Activated CD4-positive, alpha-beta memory T cell treated with anti-CD3 and anti-CD28 coated beads for 36 hours (primary cell): ENCODE measurements at regions of chr10 and their contacts with region 1.

Region 1: DNA sequence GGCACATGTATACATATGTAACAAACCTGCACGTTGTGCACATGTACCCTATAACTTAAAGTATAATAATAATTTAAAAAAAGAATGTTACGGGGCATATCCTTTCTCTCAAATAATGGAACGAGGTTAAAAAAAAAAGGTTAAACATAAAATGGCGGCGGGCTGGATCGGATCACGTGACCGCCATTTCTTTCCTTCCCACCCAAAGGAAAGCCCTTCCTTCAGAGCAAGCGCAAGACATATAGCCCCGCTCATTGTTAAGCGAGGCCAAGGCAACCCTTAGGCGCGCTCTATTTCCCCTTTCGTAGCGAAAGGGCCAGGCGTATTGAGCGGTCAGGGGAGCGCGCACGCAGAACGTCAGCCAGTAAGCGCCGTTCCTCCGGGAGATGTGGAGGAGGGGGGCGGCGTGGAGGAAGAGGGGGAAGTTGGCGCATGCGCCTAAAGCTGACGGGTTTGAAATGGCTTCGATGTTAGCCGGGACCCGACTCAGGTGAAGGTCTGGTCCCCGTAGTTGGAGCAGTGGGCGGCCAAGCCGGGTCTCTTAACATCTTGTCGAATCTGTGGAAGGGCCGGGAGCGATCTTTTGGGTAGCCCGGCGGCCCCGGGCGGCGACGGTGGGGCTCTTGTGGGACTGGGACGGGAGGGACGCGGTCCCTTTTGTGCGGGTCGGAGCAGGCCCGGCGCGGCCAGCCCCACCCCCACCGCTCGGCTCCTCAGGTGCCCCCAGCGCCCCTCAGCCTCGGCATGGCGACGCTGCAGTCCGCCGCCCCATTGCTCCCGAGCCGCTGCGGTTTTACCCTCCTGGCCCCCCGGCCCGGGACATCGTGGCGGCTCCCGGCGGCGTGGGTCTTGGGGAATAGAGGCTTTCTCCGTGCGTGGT is at the start of gene CCAR1:
- DNase-seq: peak; percentile 98
- H3K4me3 Mint-ChIP-seq: peak within 1 kb of the TSS; percentile 96
- H3K27ac Mint-ChIP-seq: peak within 1 kb of the TSS; percentile 96
- H3K4me1 Mint-ChIP-seq: peaks cover 10% of the 10 kb centered on the region
- H3K27me3 Mint-ChIP-seq: peaks cover 1% of the 10 kb centered on the region
- total RNA-seq, gene CCAR1: 72.7 to 74.4 TPM

Region 2: GRCh38 chr10:68074775-68075549 is 646.1 kb before region 1 on chr10 and contains the start of gene HERC4:
- CTCF ChIA-PET with region 1: no interaction called
- POLR2A ChIA-PET with region 1: no interaction called
- intact Hi-C with region 1: loop called (anchors 10 kb)
- DNase-seq: peak; percentile 94
- H3K4me3 Mint-ChIP-seq: peak within 1 kb of the TSS; percentile 89
- H3K27ac Mint-ChIP-seq: peak within 1 kb of the TSS; percentile 89
- H3K4me1 Mint-ChIP-seq: peaks cover 35% of the 10 kb centered on the region
- H3K27me3 Mint-ChIP-seq: no peaks in the 10 kb centered on the region
- total RNA-seq, gene HERC4: 55.7 to 59.0 TPM

Region 3: DNA sequence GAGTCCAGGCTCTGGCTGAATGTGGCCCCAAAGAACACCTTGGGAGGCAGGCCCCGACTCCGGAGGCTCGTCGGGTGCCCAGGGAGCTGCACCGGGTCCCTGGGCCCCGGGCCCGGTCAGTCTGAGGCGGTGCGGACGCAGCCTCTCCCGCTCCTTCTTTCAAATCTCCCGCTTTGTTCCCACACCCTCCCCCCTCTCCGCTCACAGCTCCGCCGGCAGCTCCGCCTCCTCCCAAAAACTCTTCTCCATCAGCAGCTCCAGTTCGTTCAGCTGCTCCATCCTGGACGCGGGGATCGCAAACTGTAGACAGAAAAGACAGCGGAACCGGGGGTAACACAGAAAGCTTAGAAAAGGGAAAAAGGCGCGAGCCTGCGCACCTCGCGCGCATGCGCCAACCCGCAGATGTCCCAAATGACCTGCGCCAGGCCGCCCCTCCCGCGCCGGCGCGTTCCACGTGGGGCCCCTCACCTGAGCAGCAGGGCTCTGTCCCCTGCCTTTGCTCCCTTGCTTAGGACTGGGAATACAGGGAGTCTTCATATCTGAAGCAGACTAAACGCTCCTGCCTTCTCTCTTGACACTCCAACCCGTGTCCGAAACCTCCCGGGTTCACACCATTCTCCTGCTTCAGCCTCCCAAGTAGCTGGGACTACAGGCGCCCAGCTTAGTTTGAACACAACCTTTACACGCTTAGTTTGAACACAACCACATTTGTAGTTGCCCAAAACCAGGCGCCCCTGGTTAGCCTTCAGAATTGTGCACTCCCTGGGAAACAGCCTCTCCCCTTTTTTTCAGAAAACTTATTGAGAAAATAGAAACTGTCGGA is 249.2 kb before region 1 on chr10 and contains the start of gene DNA2:
- CTCF ChIA-PET with region 1: no interaction called
- POLR2A ChIA-PET with region 1: no interaction called
- intact Hi-C with region 1: loop called (anchors 2 kb)
- DNase-seq: peak; percentile 86
- H3K4me3 Mint-ChIP-seq: peak within 1 kb of the TSS; percentile 95
- H3K27ac Mint-ChIP-seq: peak within 1 kb of the TSS; percentile 89
- H3K4me1 Mint-ChIP-seq: peaks cover 19% of the 10 kb centered on the region
- H3K27me3 Mint-ChIP-seq: no peaks in the 10 kb centered on the region
- total RNA-seq, gene DNA2: 36.8 to 42.0 TPM

Region 4: GRCh38 chr10:68526626-68527307 is 194.3 kb before region 1 on chr10:
- CTCF ChIA-PET with region 1: no interaction called
- POLR2A ChIA-PET with region 1: interaction called, 3 read pairs
- intact Hi-C with region 1: loop called (anchors 1 kb)
- DNase-seq: no peak
- H3K4me3 Mint-ChIP-seq: peak overlapping the region; percentile 90
- H3K27ac Mint-ChIP-seq: peak overlapping the region; percentile 77
- H3K4me1 Mint-ChIP-seq: peaks cover 9% of the 10 kb centered on the region
- H3K27me3 Mint-ChIP-seq: no peaks in the 10 kb centered on the region

Region 5: GRCh38 chr10:68550747-68551411 is 170.2 kb before region 1 on chr10:
- CTCF ChIA-PET with region 1: interaction called, 10 read pairs
- POLR2A ChIA-PET with region 1: no interaction called
- intact Hi-C with region 1: loop called (anchors 1 kb)
- DNase-seq: peak; percentile 54
- H3K4me3 Mint-ChIP-seq: no peak overlapping the region
- H3K27ac Mint-ChIP-seq: no peak overlapping the region
- H3K4me1 Mint-ChIP-seq: no peaks in the 10 kb centered on the region
- H3K27me3 Mint-ChIP-seq: no peaks in the 10 kb centered on the region

Region 6: GRCh38 chr10:68600041-68600778 is 120.8 kb before region 1 on chr10:
- CTCF ChIA-PET with region 1: no interaction called
- POLR2A ChIA-PET with region 1: no interaction called
- intact Hi-C with region 1: loop called (anchors 2 kb)
- DNase-seq: peak; percentile 65
- H3K4me3 Mint-ChIP-seq: peak overlapping the region; percentile 81
- H3K27ac Mint-ChIP-seq: peak overlapping the region; percentile 67
- H3K4me1 Mint-ChIP-seq: peaks cover 23% of the 10 kb centered on the region
- H3K27me3 Mint-ChIP-seq: no peaks in the 10 kb centered on the region

Region 7: GRCh38 chr10:69269761-69270160 is 548.7 kb after region 1 on chr10:
- CTCF ChIA-PET with region 1: no interaction called
- POLR2A ChIA-PET with region 1: no interaction called
- intact Hi-C with region 1: no loop called
- DNase-seq: no peak
- H3K4me3 Mint-ChIP-seq: no peak overlapping the region
- H3K27ac Mint-ChIP-seq: no peak overlapping the region
- H3K4me1 Mint-ChIP-seq: peaks cover 3% of the 10 kb centered on the region
- H3K27me3 Mint-ChIP-seq: no peaks in the 10 kb centered on the region